ENCODE measurements at regions of chr15 and their contacts with region 1.

Region 1: GRCh38 chr15:78481917-78482316 is 25.5 kb upstream of the HYKK start:
- DNase-seq: no peak
- H3K4me3 ChIP-seq: no peak overlapping the region
- CTCF ChIP-seq: no peak

Region 2: DNA sequence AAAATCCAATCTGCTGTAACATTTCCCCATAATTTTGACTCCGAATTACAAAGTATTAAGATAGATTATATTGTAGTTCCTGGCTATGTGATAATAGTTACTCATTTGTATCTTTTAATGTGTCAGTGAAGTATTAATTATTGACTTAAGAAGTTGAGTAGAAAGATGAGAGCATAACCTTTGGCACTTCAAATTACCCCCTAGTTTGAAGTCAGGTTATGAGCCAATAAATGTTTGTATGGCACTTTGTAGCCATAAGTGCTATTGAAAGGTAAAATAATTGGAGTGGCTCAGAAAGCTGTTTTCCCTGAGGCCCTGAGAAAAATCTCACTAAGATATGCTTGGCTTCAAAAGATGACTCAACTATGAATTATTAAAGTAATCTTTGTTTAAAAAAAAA is 12.9 kb before region 1 on chr15:
- CTCF ChIA-PET with region 1: interaction called, 14 read pairs
- POLR2A ChIA-PET with region 1: no interaction called
- DNase-seq: no peak
- H3K4me3 ChIP-seq: no peak overlapping the region
- CTCF ChIP-seq: no peak

Region 3: GRCh38 chr15:78492872-78493271 is 11.0 kb after region 1 on chr15:
- CTCF ChIA-PET with region 1: interaction called, 15 read pairs
- POLR2A ChIA-PET with region 1: no interaction called
- DNase-seq: peak; percentile 5
- H3K4me3 ChIP-seq: no peak overlapping the region
- CTCF ChIP-seq: no peak